ENCODE measurements at regions of chr22 and their contacts with region 1.

Region 1: GRCh38 chr22:39306581-39307361 is 12.7 kb downstream of the RPL3 start:
- DNase-seq: peak in 2 of 3 donors; percentile 65 to 68
- H3K4me3 ChIP-seq: no peak overlapping the region
- H3K4me3 Mint-ChIP-seq: no peak overlapping the region
- H3K27ac ChIP-seq: no peak overlapping the region
- H3K27ac Mint-ChIP-seq: peak overlapping the region in 4 of 7 donors; percentile 32 to 77 (median 43)
- H3K4me1 ChIP-seq: peaks cover 35 to 46% of the 10 kb centered on the region in 2 donors
- H3K4me1 Mint-ChIP-seq: peaks cover 42% of the 10 kb centered on the region
- H3K27me3 ChIP-seq: no peaks in the 10 kb centered on the region
- H3K27me3 Mint-ChIP-seq: peaks cover 2 to 10% (median 8%) of the 10 kb centered on the region in 3 donors
- CTCF ChIP-seq: peak; percentile 51

Region 2: DNA sequence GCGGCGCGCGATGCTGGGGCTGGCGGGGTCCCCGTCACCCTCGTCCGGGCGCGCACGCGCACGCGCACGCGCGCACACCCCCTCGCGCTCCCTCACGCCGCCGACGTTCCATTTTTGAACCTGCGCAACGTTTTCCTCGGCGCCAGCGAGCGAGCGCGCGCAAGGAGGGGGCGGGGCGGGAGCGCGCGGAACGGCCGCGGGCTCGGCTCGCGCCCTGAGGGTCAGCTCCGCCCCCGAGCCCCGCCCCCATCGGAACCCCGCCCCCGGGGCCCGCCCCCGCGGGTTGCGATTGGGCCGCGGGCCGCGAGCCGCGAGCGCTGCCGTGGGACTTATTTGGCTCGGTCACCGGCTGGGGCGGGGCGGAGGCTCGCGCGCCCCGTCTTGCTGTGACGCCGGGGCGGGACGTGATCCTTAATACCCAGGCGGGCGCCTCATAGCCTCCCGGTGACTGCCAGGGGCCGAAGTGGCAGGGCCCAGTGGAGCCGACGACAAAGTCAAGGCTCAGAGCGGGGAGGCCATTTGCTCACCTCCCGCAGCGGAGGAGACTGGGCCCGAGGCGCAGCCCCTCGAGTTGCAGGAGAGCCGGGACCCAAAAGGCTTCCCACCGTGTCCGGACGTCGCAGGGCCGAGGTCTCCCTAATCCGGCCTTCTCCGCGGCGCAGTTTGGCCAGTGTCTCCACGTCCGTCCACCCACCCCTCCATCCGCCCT is 154.1 kb before region 1 on chr22 and contains the start of gene CBX7:
- intact Hi-C with region 1: loop called in 1 of 2 experiments (anchors 5 kb)
- DNase-seq: peak; percentile 87 to 91 (median 89)
- H3K4me3 ChIP-seq: peak within 1 kb of the TSS; percentile 64 to 86 (median 84)
- H3K4me3 Mint-ChIP-seq: peak within 1 kb of the TSS; percentile 80 to 90
- H3K27ac ChIP-seq: peak within 1 kb of the TSS in 1 of 2 donors; percentile 56
- H3K27ac Mint-ChIP-seq: peak within 1 kb of the TSS in 6 of 7 donors; percentile 37 to 84 (median 72)
- H3K4me1 ChIP-seq: peaks cover 18 to 25% of the 10 kb centered on the region in 2 donors
- H3K4me1 Mint-ChIP-seq: peaks cover 25% of the 10 kb centered on the region
- H3K27me3 ChIP-seq: peaks cover 19 to 35% of the 10 kb centered on the region in 2 donors
- H3K27me3 Mint-ChIP-seq: peaks cover 36 to 44% (median 38%) of the 10 kb centered on the region in 3 donors
- CTCF ChIP-seq: no peak
- polyA plus RNA-seq, gene CBX7: 3.1 to 18.0 (median 4.0) TPM

Region 3: DNA sequence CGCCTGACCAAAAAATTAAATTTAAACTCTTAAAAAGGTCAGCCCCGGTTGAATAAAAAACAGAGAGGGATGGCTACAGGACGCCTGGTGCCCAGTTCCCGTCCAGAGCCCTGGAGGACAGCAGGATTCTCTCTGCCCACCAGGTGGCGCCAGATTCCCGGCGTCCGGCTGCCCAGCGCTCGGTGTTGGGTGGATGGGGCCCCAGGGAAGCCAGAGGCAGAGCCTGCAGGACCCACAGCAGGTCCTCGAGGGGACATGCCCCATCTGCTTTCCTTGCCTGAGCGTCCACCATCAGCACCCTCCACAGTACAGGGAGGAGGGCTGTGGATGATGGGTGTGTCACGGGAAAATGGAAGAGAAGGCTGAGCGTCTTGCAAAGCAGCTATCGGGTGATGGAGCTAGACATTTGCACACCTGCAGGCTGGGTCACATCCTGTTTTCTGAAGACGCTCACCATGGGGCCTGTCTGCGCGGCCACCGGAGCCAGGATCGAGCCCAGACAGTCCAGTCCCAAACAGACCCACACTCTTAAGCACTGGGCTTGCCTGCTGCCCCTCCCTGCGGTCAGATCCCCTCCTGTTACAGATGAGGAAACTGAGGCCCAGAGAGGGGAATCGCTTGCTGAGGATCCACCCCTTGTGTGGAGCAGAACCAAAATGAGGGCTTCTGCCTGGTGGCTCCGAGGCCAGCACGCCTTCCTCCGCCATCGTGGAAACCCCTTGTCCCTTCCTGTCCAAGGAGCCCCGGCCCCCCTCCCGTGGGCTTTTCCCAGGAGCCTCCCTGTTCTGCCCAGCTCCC is 135.7 kb before region 1 on chr22:
- intact Hi-C with region 1: loop called in 1 of 2 experiments (anchors 2 kb)
- DNase-seq: peak; percentile 74 to 78 (median 77)
- H3K4me3 ChIP-seq: no peak overlapping the region
- H3K4me3 Mint-ChIP-seq: peak overlapping the region; percentile 48 to 54
- H3K27ac ChIP-seq: no peak overlapping the region
- H3K27ac Mint-ChIP-seq: no peak overlapping the region
- H3K4me1 ChIP-seq: peaks cover 11 to 12% of the 10 kb centered on the region in 2 donors
- H3K4me1 Mint-ChIP-seq: peaks cover 21% of the 10 kb centered on the region
- H3K27me3 ChIP-seq: peaks cover 0 to 23% of the 10 kb centered on the region in 2 donors
- H3K27me3 Mint-ChIP-seq: peaks cover 21 to 55% (median 35%) of the 10 kb centered on the region in 3 donors
- CTCF ChIP-seq: peak; percentile 96

Region 4: DNA sequence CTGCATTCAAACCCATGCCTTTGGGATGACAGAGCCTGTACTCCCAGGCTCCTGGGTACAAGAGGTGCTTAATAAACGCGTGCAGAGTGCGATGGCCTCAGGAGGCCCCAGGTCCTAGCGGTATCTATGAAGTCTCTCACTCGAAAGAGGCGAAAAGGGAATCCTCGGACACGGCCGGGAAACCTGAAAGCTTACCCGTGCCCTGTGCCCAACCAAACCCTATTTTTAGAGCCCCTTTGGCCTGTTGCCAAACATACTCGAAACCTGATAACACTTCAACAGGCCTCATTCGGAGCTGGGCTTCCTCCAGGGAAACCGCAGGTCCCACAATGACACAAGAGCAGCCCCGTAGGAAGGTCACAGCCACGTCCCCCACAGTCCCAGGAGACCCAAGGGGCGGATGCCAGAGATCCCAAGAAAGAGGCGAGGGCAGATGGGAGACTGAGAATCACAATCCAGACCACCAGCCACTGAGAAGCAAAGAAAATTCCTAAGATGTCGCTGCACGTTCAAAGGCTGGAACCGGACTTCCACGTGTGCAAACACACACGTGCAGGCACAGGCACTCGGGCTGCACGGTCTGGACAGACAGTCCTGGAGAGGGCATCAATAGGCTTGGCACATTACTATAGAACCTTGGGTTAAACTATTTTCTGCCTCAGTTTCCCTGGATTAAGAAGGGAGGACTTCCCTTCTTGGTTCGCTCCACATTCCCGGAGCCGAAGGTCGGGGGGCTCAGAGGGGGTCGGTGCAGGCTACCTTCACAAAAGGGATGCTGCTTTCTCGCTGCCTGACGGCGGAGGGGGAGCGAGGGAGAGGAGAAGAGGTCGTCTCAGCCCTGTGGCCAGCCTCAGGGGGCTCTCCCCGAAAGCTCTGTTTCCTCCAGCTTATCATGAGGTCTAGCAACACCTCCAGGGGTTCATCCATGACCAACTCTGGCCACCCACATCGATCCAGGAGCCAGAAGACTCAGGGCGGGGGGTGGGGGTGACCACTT is 70.2 kb before region 1 on chr22:
- intact Hi-C with region 1: loop called in 1 of 2 experiments (anchors 5 kb)
- DNase-seq: peak in 1 of 3 donors; percentile 39
- H3K4me3 ChIP-seq: no peak overlapping the region
- H3K4me3 Mint-ChIP-seq: peak overlapping the region in 1 of 2 donors; percentile 90
- H3K27ac ChIP-seq: no peak overlapping the region
- H3K27ac Mint-ChIP-seq: peak overlapping the region in 1 of 7 donors; percentile 39
- H3K4me1 ChIP-seq: peaks cover 20 to 32% of the 10 kb centered on the region in 2 donors
- H3K4me1 Mint-ChIP-seq: peaks cover 49% of the 10 kb centered on the region
- H3K27me3 ChIP-seq: peaks cover 72 to 100% of the 10 kb centered on the region in 2 donors
- H3K27me3 Mint-ChIP-seq: peaks cover 97 to 100% (median 100%) of the 10 kb centered on the region in 3 donors
- CTCF ChIP-seq: no peak

Region 5: GRCh38 chr22:39266398-39267030 is 40.3 kb before region 1 on chr22:
- intact Hi-C with region 1: loop called in 1 of 2 experiments (anchors 5 kb)
- DNase-seq: peak; percentile 76 to 89 (median 78)
- H3K4me3 ChIP-seq: no peak overlapping the region
- H3K4me3 Mint-ChIP-seq: peak overlapping the region in 1 of 2 donors; percentile 33
- H3K27ac ChIP-seq: peak overlapping the region; percentile 51 to 70
- H3K27ac Mint-ChIP-seq: peak overlapping the region; percentile 68 to 92 (median 78)
- H3K4me1 ChIP-seq: peaks cover 19 to 26% of the 10 kb centered on the region in 2 donors
- H3K4me1 Mint-ChIP-seq: peaks cover 32% of the 10 kb centered on the region
- H3K27me3 ChIP-seq: peaks cover 0 to 2% of the 10 kb centered on the region in 2 donors
- H3K27me3 Mint-ChIP-seq: peaks cover 16 to 28% (median 17%) of the 10 kb centered on the region in 3 donors
- CTCF ChIP-seq: no peak

Region 6: GRCh38 chr22:39277155-39277607 is 29.6 kb before region 1 on chr22:
- intact Hi-C with region 1: loop called (anchors 2 to 5 kb)
- DNase-seq: peak; percentile 61 to 83 (median 72)
- H3K4me3 ChIP-seq: peak overlapping the region in 1 of 3 experiments; percentile 11
- H3K4me3 Mint-ChIP-seq: peak overlapping the region in 1 of 2 donors; percentile 63
- H3K27ac ChIP-seq: peak overlapping the region in 1 of 2 donors; percentile 77
- H3K27ac Mint-ChIP-seq: peak overlapping the region; percentile 81 to 96 (median 90)
- H3K4me1 ChIP-seq: peaks cover 33 to 44% of the 10 kb centered on the region in 2 donors
- H3K4me1 Mint-ChIP-seq: peaks cover 42% of the 10 kb centered on the region
- H3K27me3 ChIP-seq: peaks cover 3 to 31% of the 10 kb centered on the region in 2 donors
- H3K27me3 Mint-ChIP-seq: peaks cover 32 to 54% (median 50%) of the 10 kb centered on the region in 3 donors
- CTCF ChIP-seq: no peak

Region 7: DNA sequence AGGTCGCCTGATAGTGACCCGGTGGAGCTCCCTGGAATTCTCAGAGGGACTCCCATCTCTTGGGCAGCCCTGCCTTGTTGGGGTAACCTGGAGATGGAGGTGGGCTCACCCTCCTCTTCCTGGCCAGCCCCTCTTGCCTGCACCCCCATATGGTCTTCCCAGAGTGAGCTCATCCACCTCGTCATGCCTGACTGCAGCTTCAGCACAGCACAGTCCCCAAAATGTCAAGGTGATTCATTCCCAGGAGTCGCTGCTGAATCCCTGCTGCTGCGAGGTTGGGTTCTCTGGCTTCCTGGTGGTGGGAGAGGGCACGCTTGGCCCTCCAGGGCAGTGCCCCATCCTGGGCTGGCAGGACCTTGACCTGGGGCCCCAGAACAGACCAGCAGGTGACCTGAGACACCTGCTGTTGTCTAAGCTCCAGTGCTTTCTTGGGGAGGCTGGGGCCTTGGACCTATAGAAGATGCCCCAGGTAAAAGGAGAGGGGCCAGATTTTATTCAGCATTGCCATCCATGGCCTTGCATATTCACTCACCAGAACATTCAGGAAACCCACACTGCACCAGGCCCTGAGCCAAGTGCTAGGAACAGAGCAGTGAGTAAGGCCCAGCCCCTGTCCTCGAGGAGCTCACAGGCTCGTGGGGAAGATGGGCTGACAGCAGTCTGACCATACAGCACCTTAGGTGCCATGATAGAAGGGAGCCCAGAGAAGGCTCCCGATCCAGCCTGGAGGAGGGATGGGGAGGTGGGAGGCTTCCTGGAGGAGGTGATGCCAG is 336.7 kb after region 1 on chr22:
- intact Hi-C with region 1: no loop called
- DNase-seq: no peak
- H3K4me3 ChIP-seq: no peak overlapping the region
- H3K4me3 Mint-ChIP-seq: no peak overlapping the region
- H3K27ac ChIP-seq: no peak overlapping the region
- H3K27ac Mint-ChIP-seq: peak overlapping the region in 2 of 7 donors; percentile 22 to 33
- H3K4me1 ChIP-seq: no peaks in the 10 kb centered on the region
- H3K4me1 Mint-ChIP-seq: no peaks in the 10 kb centered on the region
- H3K27me3 ChIP-seq: no peaks in the 10 kb centered on the region
- H3K27me3 Mint-ChIP-seq: peaks cover 5 to 14% (median 12%) of the 10 kb centered on the region in 3 donors
- CTCF ChIP-seq: no peak

Measured in CD14-positive monocyte (primary cell).